ENCODE measurements at regions of chr19 and their contacts with region 1.

Region 1: GRCh38 chr19:6663236-6664201 is 6.4 kb downstream of the TNFSF14 start:
- DNase-seq: peak; percentile 70
- ATAC-seq: peak; percentile 40
- H3K4me3 Mint-ChIP-seq: no peak overlapping the region
- H3K27ac Mint-ChIP-seq: no peak overlapping the region
- H3K4me1 Mint-ChIP-seq: peaks cover 19% of the 10 kb centered on the region
- H3K27me3 Mint-ChIP-seq: no peaks in the 10 kb centered on the region

Region 2: DNA sequence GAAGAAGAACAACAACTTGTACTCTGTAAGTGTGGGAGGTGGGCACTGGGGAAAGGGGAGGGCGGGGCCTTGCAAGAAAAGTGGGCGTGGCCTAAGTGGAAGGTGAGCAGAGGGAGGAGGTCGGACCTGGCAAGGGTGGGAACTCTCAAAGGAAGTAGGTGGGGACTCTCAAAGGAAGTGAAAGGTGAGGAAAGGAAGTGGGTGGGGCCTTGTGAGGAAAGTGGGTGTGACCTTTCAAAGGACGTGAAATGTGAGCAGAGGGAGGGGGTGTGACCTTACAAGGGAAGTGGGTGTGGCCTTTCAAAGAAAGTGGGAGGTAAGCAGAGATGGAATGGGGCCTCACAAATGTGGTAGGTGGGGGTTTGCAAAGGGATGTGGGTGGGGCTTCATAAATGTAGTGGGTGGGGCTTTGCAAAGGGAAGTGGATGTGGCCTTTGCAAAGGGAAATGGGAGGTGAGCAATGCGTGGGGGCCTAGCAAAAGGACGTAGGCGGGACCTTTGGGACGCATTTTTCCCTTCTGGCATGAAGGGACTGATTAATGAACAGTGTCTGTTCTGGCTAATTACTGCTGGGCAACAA is 502.2 kb before region 1 on chr19:
- CTCF ChIA-PET with region 1: no interaction called
- POLR2A ChIA-PET with region 1: no interaction called
- intact Hi-C with region 1: no loop called
- DNase-seq: peak; percentile 71
- ATAC-seq: peak; percentile 85
- H3K4me3 Mint-ChIP-seq: no peak overlapping the region
- H3K27ac Mint-ChIP-seq: no peak overlapping the region
- H3K4me1 Mint-ChIP-seq: peaks cover 7% of the 10 kb centered on the region
- H3K27me3 Mint-ChIP-seq: no peaks in the 10 kb centered on the region

Region 3: DNA sequence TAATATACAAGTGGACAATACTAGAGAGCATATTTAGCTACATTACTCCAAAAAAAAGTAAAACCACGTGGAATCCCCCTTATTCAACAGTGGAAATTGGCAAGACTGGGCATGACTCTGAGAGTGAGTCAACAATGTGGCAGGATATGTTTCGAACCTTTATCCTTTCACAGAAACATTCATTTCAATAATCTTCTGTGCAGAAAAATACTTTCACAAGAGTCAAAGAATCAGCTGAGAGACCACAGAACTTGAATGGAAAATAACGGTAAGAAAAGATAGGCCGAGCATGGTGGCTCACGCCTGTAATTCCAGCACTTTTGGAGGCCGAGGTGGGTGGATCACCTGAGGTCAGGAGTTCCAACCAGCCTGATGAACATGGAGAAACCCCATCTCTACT is 47.5 kb before region 1 on chr19:
- CTCF ChIA-PET with region 1: no interaction called
- POLR2A ChIA-PET with region 1: no interaction called
- intact Hi-C with region 1: loop called in 1 of 2 experiments (anchors 1 kb)
- DNase-seq: peak; percentile 53
- ATAC-seq: peak; percentile 88
- H3K4me3 Mint-ChIP-seq: no peak overlapping the region
- H3K27ac Mint-ChIP-seq: peak overlapping the region; percentile 29
- H3K4me1 Mint-ChIP-seq: peaks cover 29% of the 10 kb centered on the region
- H3K27me3 Mint-ChIP-seq: peaks cover 32% of the 10 kb centered on the region

Region 4: DNA sequence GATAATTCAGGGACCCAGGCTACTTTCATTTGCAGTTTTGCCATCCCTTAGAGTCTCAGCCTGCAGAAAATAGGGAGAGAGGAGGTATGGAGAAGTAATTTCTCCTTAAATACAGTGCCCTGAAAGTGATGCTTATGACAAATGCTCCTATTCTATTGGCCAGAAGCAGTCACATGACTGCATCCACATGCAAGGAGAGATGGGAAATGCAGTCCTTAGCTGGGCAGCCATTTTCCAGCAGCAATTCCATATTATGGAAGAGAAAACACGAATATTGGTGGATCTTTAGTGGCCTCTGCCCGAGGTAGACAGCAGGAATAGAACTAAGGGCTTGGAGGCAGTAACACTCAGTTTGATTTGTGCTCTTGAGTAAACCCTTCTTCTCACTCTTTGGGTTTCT is 148.4 kb after region 1 on chr19:
- CTCF ChIA-PET with region 1: no interaction called
- POLR2A ChIA-PET with region 1: no interaction called
- intact Hi-C with region 1: loop called in 1 of 2 experiments (anchors 5 kb)
- DNase-seq: no peak
- ATAC-seq: no peak
- H3K4me3 Mint-ChIP-seq: no peak overlapping the region
- H3K27ac Mint-ChIP-seq: no peak overlapping the region
- H3K4me1 Mint-ChIP-seq: peaks cover 75% of the 10 kb centered on the region
- H3K27me3 Mint-ChIP-seq: no peaks in the 10 kb centered on the region